PC-3 (cell line): ENCODE measurements at regions of chr4 and their contacts with region 1.

Region 1: DNA sequence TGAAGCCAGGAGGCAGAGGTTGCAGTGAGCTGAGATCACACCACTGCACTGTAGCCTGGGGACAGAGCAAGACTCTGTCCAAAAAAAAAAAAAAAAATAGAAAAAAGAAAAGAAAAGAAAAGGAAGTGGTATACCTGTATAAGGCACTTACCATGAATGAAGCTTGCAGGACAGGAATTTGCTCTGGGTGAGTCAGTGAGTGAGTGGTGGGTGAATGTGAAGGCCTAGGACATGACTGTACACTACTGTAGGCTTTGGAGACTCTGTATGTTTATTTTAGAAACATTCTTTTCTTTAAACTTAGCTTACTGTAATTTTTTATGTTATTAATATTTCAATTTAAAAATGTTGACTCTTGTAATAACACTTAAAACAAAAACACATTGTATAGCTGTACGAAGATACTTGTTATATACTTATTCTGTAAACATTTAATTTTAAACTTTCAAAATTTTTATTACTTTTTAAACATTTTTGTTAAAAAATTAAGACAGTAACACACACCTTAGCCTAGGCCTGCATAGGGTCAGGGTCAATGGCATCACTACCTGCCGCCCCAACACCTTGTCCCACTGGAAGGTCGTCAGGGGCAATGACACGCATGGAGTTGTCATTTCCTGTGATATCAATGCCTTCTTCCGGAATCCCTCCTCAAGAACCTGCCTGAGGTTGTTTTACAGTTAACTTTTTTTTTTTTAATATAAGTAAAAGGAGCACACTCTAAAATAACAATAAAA is 78.7 kb downstream of the CLNK start:
- DNase-seq: peak; percentile 78
- ATAC-seq: peak; percentile 89
- H3K4me3 ChIP-seq: no peak overlapping the region
- H3K27ac ChIP-seq: peak overlapping the region; percentile 86
- H3K4me1 ChIP-seq: peaks cover 18% of the 10 kb centered on the region
- H3K27me3 ChIP-seq: no peaks in the 10 kb centered on the region
- CTCF ChIP-seq: no peak

Region 2: GRCh38 chr4:10704430-10704810 is 98.5 kb after region 1 on chr4:
- CTCF ChIA-PET with region 1: no interaction called
- POLR2A ChIA-PET with region 1: interaction called, 33 read pairs
- intact Hi-C with region 1: loop called (anchors 10 kb)
- DNase-seq: no peak
- ATAC-seq: no peak
- H3K4me3 ChIP-seq: no peak overlapping the region
- H3K27ac ChIP-seq: no peak overlapping the region
- H3K4me1 ChIP-seq: peaks cover 22% of the 10 kb centered on the region
- H3K27me3 ChIP-seq: no peaks in the 10 kb centered on the region
- CTCF ChIP-seq: no peak